ENCODE measurements at regions of chr2 and their contacts with region 1.

Region 1: DNA sequence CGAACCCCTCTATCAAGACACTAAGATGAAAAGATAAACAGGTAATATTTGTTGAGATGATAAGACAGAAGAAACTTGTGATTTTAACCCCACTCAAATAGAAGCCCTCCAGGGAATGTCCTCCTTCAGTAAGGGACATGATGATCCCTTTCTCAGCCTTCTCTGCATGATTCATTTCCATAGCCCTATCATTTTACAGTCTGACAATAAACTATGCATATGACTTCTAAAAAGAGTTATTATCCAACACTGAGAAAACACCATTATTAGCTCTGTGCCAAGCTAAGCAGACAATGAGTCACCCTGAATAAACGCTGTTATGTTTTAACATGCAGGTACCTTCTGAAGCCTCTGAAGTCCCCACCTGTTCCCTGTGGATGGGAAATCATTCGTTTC is 54.7 kb downstream of the DTNB start:
- DNase-seq: peak; percentile 97
- H3K4me3 ChIP-seq: peak overlapping the region in 2 of 3 experiments; percentile 34 to 65
- H3K27ac ChIP-seq: peak overlapping the region; percentile 99
- H3K4me1 ChIP-seq: peaks cover 45% of the 10 kb centered on the region
- H3K27me3 ChIP-seq: no peaks in the 10 kb centered on the region
- CTCF ChIP-seq: no peak
- POLR2A ChIP-seq: no peak

Region 2: DNA sequence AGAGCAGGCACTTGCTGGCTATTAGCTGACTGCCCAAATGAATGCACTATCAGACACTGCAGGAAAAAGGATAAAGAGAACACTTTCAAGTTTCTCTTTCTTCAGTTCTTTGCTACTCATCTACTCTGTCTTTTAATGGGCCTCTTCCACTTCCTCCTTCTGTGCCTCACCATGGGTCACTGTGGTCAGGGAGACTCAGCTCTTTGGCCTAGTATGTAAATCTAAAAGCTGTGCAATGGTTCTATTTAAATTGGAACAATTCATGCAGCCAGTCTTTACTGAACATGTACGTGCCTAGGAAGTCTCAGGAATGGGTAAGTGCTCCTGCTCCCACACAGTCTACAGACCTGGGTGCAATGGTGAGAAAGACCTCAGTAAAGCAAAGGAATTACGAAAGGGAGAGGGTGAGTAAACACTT is 197.8 kb before region 1 on chr2:
- CTCF ChIA-PET with region 1: no interaction called
- POLR2A ChIA-PET with region 1: no interaction called
- dilution Hi-C with region 1: no loop called
- intact Hi-C with region 1: no loop called
- DNase-seq: no peak
- H3K4me3 ChIP-seq: no peak overlapping the region
- H3K27ac ChIP-seq: no peak overlapping the region
- H3K4me1 ChIP-seq: no peaks in the 10 kb centered on the region
- H3K27me3 ChIP-seq: no peaks in the 10 kb centered on the region
- CTCF ChIP-seq: no peak
- POLR2A ChIP-seq: no peak

Region 3: GRCh38 chr2:25453199-25453905 is 165.3 kb before region 1 on chr2:
- CTCF ChIA-PET with region 1: no interaction called
- POLR2A ChIA-PET with region 1: no interaction called
- dilution Hi-C with region 1: no loop called
- intact Hi-C with region 1: no loop called
- DNase-seq: no peak
- H3K4me3 ChIP-seq: no peak overlapping the region
- H3K27ac ChIP-seq: no peak overlapping the region
- H3K4me1 ChIP-seq: no peaks in the 10 kb centered on the region
- H3K27me3 ChIP-seq: no peaks in the 10 kb centered on the region
- CTCF ChIP-seq: no peak
- POLR2A ChIP-seq: no peak

Region 4: DNA sequence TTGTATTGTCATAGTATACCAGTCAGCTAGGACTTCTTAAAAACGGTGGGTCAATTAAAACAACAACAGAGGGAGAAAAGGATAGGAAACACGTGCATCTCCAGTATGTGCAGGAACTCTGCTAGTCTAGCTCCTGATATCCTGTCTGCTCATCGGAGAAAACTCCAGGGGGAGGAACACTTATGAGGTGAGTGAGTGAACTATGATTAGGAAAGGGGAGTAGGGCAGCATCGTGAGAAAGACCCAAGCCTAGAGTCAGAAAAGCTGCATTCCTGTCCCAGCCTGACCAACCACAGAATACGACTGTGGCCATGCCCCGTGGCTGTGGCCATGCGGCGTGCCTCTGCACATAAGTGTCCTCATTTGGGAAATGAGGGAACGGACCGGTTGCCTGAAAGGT is 20.5 kb after region 1 on chr2:
- CTCF ChIA-PET with region 1: interaction called, 6 read pairs
- POLR2A ChIA-PET with region 1: no interaction called
- dilution Hi-C with region 1: no loop called
- intact Hi-C with region 1: loop called (anchors 2 kb)
- DNase-seq: peak; percentile 54
- H3K4me3 ChIP-seq: no peak overlapping the region
- H3K27ac ChIP-seq: no peak overlapping the region
- H3K4me1 ChIP-seq: peaks cover 4% of the 10 kb centered on the region
- H3K27me3 ChIP-seq: no peaks in the 10 kb centered on the region
- CTCF ChIP-seq: no peak
- POLR2A ChIP-seq: no peak

Region 5: GRCh38 chr2:25651071-25651470 is 32.4 kb after region 1 on chr2:
- CTCF ChIA-PET with region 1: interaction called, 7 read pairs
- POLR2A ChIA-PET with region 1: interaction called, 4 read pairs
- dilution Hi-C with region 1: no loop called
- intact Hi-C with region 1: loop called (anchors 1 kb)
- DNase-seq: peak; percentile 96
- H3K4me3 ChIP-seq: no peak overlapping the region
- H3K27ac ChIP-seq: peak overlapping the region; percentile 87
- H3K4me1 ChIP-seq: peaks cover 21% of the 10 kb centered on the region
- H3K27me3 ChIP-seq: no peaks in the 10 kb centered on the region
- CTCF ChIP-seq: no peak
- POLR2A ChIP-seq: no peak